ENCODE measurements at regions of chr6 and their contacts with region 1.

Region 1: GRCh38 chr6:50610562-50610961 is 102.8 kb upstream of the TFAP2D start:
- DNase-seq: no peak
- ATAC-seq: no peak

Region 2: DNA sequence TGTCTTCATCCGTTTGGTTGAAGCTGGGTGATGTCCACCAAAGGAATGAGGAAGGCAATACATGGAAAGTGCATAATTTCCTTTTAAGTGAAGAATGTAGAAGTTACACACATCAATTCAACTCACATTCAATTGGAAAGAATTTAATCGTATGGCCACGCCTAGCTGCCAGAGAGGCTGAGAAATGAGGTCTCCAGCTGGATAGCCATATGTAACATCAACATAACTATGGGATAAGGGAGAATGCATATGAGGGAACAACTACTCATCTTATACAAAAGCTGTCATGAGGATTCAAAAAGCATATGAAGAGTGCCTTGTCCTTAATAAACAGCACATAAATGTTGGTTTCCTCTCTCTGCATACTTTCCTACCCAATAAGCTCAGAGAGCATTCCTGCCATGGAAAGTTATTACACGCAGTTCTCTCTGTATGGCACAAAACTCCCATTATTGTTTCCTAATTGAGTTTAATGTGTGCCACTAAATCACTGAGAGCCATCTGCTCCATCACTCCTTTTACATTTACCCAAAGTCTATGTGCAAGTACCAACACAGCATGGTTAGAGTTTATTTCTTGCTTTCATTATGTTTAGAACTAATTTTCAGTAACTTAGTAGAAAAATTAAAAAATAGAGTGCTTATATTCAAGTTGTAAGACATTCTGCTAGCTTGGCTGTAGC is 81.4 kb after region 1 on chr6:
- intact Hi-C with region 1: loop called (anchors 5 kb)
- DNase-seq: no peak
- ATAC-seq: no peak

Measured in sciatic nerve (tissue), 2 donors.